ENCODE measurements at regions of chr3 and their contacts with region 1.

Region 1: DNA sequence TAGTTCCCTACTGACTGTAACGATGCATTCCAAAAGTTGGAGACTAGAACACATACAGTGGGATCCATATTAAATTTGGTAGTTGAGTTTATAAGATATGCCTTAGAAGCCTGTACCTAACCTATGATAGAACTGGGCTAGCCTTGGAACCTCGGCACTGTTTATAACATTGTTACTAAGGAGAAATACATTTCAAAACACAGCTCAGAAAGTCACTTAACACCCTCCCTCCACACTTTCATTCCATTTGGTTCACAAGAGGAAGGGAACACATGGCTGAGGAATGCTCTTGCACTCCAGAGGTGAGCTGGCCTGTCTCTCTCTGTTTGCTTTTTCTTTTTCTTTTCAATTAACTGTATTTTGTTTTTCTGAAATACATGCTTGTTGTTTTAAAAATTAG is 48.7 kb upstream of the TSC22D2 start:
- DNase-seq: no peak
- CTCF ChIP-seq: no peak

Region 2: DNA sequence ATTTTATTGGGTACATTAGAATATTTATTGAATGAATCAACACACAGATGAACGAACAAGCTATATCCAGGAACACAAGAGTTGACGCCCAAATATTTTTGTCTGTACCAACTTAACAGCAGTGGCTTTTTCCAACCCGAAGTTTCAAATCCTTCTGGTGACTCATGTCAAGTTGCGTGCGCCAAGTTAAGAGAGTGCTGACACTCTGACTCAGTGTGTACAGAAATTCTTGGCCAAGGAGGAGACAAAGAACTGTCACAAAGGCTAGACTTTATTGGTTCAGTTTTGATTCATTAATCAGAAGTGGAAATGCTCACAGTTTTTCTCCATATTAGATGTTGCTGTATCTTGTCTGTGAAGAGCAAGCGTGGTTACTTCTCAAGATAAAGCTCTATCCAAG is 10.9 kb before region 1 on chr3:
- CTCF ChIA-PET with region 1: interaction called, 12 read pairs
- POLR2A ChIA-PET with region 1: no interaction called
- DNase-seq: no peak
- CTCF ChIP-seq: no peak